Activated T-helper 1 cell treated with anti-CD3 and anti-CD28 coated beads, Interleukin-12 subunit alpha, Interleukin-12 subunit beta, Interleukin-2, Interleukin-4 antibody, amounts not matched to agents 30 ng/mL and 10 ng/mL and 1 ng/mL, durations not matched to agents 14 hours and 24 hours and 36 hours (primary cell): ENCODE measurements at regions of chr3 and their contacts with region 1.

Region 1: GRCh38 chr3:63863148-63864007 is at the starts of genes ATXN7 and THOC7:
- DNase-seq: peak; percentile 72
- H3K4me3 Mint-ChIP-seq: peak within 1 kb of the TSS; percentile 91
- H3K27ac Mint-ChIP-seq: peak within 1 kb of the TSS; percentile 94
- H3K4me1 Mint-ChIP-seq: peaks cover 67% of the 10 kb centered on the region
- H3K27me3 Mint-ChIP-seq: no peaks in the 10 kb centered on the region
- total RNA-seq, gene ATXN7: 40.7 and 48.2 TPM in 2 replicates
- total RNA-seq, gene THOC7: 100 and 106 TPM in 2 replicates

Region 2: DNA sequence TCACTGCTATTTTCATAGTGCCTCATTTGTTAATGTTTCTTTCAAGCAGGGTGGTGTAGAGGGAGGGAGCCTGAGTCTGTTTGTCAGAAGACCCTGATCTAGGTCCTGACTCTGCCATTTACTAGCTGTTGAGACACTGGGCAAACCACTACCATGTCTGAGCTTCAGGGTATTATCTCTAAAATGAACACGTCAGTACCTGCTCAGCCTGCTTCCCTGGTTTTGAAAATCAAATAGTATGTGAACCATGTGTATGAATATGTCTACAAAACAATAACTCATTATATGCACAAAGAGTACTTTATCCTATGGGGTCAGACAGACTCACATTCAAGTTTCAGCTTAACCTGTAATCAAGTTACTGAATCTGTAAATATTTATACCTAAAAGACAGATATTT is 560.1 kb before region 1 on chr3:
- intact Hi-C with region 1: no loop called
- DNase-seq: no peak
- H3K4me3 Mint-ChIP-seq: no peak overlapping the region
- H3K27ac Mint-ChIP-seq: no peak overlapping the region
- H3K4me1 Mint-ChIP-seq: no peaks in the 10 kb centered on the region
- H3K27me3 Mint-ChIP-seq: no peaks in the 10 kb centered on the region

Region 3: DNA sequence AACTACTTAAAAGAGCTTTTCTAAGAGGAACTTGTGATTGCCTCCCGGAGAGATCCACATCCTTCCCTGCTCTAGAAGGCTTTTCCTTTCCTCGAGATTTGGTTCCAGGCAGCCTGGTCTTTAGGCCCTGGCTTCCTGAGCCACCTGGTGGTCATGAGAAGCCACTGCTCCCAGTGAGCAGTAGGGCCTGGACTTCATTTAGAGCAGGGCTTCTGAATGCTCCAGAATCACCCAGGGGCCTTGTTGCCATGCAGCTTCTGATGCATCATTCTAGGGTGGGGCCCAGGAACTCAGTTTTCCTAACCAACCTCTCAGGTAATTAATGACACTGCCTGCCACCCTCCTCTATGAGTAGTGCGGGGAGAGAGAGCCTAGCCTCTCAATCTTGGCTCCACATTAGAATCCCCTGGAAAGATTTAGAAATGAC is 130.3 kb after region 1 on chr3:
- intact Hi-C with region 1: loop called (anchors 1 kb)
- DNase-seq: peak; percentile 32
- H3K4me3 Mint-ChIP-seq: no peak overlapping the region
- H3K27ac Mint-ChIP-seq: peak overlapping the region; percentile 35
- H3K4me1 Mint-ChIP-seq: peaks cover 30% of the 10 kb centered on the region
- H3K27me3 Mint-ChIP-seq: no peaks in the 10 kb centered on the region

Region 4: DNA sequence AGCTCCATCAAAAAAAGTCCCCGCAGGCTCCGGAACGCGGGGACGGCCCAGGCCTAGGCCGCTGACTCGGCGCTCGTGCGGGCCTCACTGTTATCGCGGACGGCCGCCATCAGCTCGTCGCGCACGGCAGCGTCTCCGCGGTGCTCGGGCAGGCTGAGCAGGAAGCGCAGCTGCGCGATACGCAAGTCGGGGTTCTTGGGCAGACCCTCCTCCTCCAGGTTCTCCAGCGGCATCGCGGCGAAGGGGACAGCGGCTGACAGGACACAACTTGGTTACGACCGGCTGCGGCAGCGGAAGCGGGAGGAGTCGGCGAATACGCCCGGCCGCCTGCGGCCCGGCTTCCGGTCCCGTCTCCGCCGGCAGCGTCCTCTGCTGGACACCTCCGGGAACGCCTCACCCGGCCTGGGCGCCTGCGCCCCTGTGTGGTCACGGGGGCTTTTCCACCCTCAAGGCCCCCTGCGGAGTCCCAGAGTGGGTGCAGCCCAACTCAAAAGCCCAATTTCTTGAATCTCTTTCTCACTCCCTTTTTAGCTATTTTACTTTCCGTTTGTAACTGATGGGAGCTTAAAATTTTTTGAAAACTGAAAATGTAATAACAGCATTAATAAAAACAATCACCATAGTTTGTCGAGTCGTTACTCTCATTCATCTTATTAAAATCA is 159.9 kb after region 1 on chr3 and contains the start of gene PSMD6:
- intact Hi-C with region 1: loop called (anchors 1 kb)
- DNase-seq: peak; percentile 93
- H3K4me3 Mint-ChIP-seq: peak within 1 kb of the TSS; percentile 81
- H3K27ac Mint-ChIP-seq: peak within 1 kb of the TSS; percentile 88
- H3K4me1 Mint-ChIP-seq: peaks cover 30% of the 10 kb centered on the region
- H3K27me3 Mint-ChIP-seq: peaks cover 12% of the 10 kb centered on the region
- total RNA-seq, gene PSMD6: 133 and 137 TPM in 2 replicates

Region 5: GRCh38 chr3:64717872-64718613 is 854.7 kb after region 1 on chr3:
- intact Hi-C with region 1: no loop called
- DNase-seq: no peak
- H3K4me3 Mint-ChIP-seq: no peak overlapping the region
- H3K27ac Mint-ChIP-seq: no peak overlapping the region
- H3K4me1 Mint-ChIP-seq: no peaks in the 10 kb centered on the region
- H3K27me3 Mint-ChIP-seq: no peaks in the 10 kb centered on the region